Lower lobe of right lung (tissue), 2 donors: ENCODE measurements at regions of chr4 and their contacts with region 1.

Region 1: DNA sequence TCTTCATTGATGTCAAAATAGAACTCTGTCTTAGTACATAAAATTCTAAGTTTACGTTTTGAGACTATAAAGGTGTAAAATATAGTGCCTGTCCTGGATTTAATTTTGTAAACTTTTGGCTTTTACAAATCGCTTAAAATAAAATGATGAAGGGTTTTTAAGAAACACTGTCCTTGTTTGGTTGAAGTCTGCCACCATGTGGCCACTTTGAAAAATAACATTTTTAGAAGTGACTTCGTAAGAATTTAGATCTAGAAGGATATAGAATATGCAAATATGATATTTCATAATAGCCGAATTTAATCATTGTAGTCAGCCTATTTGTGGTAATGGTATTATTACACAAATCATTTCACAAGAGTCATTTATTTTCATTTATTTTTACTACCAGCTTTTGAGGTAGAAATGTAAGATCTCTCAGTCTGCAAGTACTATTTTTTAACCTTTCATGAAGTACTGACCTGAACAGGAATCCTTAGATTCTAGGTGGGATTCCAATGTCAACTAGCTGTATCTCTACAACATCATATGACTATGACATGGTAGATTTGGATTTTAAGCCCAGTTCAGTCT is 31.0 kb upstream of the FAT4 start:
- DNase-seq: no peak
- ATAC-seq: peak in 1 of 2 donors; percentile 36
- H3K4me3 ChIP-seq: no peak overlapping the region
- H3K27ac ChIP-seq: no peak overlapping the region
- H3K4me1 ChIP-seq: no peaks in the 10 kb centered on the region
- H3K27me3 ChIP-seq: no peaks in the 10 kb centered on the region
- CTCF ChIP-seq: peak; percentile 63

Region 2: GRCh38 chr4:124334119-124334518 is 949.7 kb before region 1 on chr4:
- intact Hi-C with region 1: loop called (anchors 10 kb)
- DNase-seq: no peak
- ATAC-seq: peak; percentile 68 to 92
- H3K4me3 ChIP-seq: no peak overlapping the region
- H3K27ac ChIP-seq: no peak overlapping the region
- H3K4me1 ChIP-seq: no peaks in the 10 kb centered on the region
- H3K27me3 ChIP-seq: no peaks in the 10 kb centered on the region
- CTCF ChIP-seq: peak; percentile 69

Region 3: DNA sequence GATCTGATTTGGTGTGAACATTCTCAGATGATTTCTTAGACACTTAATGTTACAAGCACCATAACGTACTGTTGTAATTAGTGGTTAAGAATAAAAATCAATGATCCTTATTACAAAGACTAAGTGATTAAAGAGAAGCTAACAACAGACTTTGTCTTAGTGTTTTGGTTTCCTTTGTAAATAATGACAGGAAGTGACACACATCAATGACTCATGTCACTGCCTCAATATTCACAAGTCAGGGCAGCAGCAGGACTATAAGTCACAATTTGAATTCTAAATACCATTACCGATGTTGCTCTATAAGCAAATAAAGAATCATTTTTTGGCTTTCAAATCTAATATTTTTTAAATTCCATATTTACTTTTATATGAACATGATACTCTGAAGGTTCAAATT is 84.9 kb before region 1 on chr4:
- intact Hi-C with region 1: no loop called
- DNase-seq: no peak
- ATAC-seq: no peak
- H3K4me3 ChIP-seq: no peak overlapping the region
- H3K27ac ChIP-seq: no peak overlapping the region
- H3K4me1 ChIP-seq: peaks cover 3% of the 10 kb centered on the region
- H3K27me3 ChIP-seq: no peaks in the 10 kb centered on the region
- CTCF ChIP-seq: no peak

Region 4: DNA sequence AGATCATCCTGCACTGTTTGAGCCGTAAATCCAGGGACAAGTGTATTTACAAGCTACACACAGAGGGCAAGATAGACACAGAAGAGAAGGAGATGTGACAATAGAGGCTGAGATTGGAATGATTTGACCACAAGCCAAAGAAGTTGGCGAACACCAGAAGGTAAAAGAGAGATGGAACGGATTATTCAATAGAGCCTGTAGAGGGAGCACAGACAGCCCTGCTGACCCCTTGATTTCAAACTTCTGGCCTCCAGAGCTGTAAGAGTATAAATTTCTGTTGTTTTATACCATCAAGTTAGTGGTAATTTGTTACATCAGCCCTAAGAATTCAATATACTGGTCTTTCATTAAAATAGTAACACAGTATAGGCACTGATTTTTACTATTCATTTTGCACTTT is 478.7 kb after region 1 on chr4:
- intact Hi-C with region 1: no loop called
- DNase-seq: no peak
- ATAC-seq: no peak
- H3K4me3 ChIP-seq: no peak overlapping the region
- H3K27ac ChIP-seq: no peak overlapping the region
- H3K4me1 ChIP-seq: no peaks in the 10 kb centered on the region
- H3K27me3 ChIP-seq: no peaks in the 10 kb centered on the region
- CTCF ChIP-seq: no peak